GM12878 (cell line): ENCODE measurements at regions of chr12 and their contacts with region 1.

Region 1: GRCh38 chr12:54463034-54463433 is 10.4 kb downstream of the GTSF1 start:
- DNase-seq: no peak
- ATAC-seq: no peak
- H3K4me3 ChIP-seq: no peak overlapping the region
- H3K27ac ChIP-seq: no peak overlapping the region
- H3K4me1 ChIP-seq: peaks cover 3% of the 10 kb centered on the region; the same call in 1 of the 2 replicates
- H3K27me3 ChIP-seq: no peaks in the 10 kb centered on the region
- CTCF ChIP-seq: no peak
- EP300 ChIP-seq: no peak
- POLR2A ChIP-seq: no peak
- RAD21 ChIP-seq: no peak

Region 2: DNA sequence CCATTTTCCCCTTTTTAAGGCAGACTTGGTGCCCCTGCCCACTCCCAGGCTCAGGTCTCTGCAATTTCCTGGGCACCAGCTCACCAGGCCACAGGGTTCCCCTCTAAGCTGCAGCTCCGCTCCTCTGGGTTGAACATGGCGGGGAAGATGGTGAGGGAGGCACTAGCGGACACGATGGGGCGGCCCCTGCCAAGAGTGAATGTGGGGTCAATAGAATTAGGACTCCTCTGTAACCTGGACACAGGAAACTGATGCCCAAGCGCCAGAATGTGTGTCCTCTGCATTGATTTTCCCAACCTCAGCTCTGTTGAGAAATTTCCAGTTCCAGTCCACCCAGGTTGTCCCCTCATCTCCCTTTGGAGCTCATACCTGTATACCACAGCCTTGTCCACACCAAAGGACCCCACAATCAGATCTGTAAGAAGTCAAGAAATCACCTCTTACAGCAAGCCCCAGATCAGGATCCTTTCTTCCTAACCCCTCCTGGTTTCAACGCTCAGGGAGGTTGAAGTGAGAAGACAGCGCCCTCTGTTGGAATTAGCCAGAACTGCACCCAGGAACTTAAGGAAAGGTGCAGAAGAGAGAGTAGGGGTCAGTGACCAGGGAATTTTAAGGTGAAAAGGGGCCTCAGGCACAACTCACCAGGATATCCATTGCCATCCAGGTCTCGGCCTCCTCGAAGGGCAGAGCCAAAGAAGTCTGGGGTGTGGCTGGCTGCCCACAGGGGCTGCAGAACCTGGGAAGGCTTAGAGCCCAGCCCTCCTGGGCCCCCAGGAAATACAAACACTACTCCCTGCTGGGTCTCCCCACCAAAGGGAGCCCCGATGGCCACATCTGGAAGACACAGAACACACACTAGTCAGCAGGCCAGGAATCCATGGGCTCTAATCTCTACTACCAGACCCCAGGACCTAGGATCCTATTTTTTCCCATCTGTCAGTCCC is 58.7 kb before region 1 on chr12:
- CTCF ChIA-PET with region 1: interaction called, 17 read pairs
- POLR2A ChIA-PET with region 1: no interaction called
- RAD21 ChIA-PET with region 1: interaction called, 5 read pairs
- SMC1A ChIA-PET with region 1: interaction called, 10 read pairs
- in situ Hi-C with region 1: no loop called
- intact Hi-C with region 1: no loop called
- DNase-seq: no peak
- ATAC-seq: peak; percentile 67
- H3K4me3 ChIP-seq: no peak overlapping the region
- H3K27ac ChIP-seq: no peak overlapping the region
- H3K4me1 ChIP-seq: no peaks in the 10 kb centered on the region
- H3K27me3 ChIP-seq: no peaks in the 10 kb centered on the region; a peak in 1 of 4 replicates
- CTCF ChIP-seq: peak; percentile 77 to 99 (median 94)
- EP300 ChIP-seq: no peak
- POLR2A ChIP-seq: no peak
- RAD21 ChIP-seq: peak; percentile 44